A549 (cell line): ENCODE measurements at regions of chr5 and their contacts with region 1.

Region 1: DNA sequence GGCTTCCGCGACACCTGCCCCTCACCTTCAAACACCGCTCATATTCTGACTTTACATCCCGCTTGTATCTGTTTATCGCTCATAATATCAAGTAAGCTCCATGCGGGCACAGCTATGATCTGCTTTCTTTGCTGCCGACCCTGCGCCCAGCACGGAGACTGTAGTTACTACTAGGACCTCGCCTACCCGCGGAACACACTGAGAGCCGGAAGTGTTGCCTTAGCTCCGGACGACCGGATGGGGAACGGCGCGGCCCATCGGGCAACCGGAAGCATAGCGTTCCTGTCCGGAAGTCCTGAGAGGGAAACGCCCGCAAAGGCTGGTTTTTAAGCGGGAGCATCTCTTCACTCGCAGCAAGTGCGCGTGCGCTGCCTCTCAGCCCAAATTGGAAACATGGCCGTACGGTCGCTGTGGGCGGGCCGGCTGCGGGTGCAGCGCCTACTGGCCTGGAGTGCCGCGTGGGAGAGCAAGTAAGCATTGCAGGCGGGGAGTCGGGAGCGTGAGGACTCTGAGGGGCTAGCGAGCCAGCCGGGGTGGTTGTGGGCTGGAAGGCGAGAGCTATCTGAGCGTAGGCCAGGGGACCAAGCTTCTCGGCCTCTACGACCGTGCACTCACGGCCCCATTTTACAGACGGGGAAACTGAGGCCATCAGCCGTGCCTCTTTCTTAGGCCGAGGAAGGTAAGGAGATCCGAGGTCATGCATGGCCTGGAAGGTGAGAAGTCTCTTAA is at the start of gene GRPEL2:
- DNase-seq: peak; percentile 98 to 99
- ATAC-seq: peak; percentile 99 to 100
- H3K4me3 ChIP-seq: peak within 1 kb of the TSS; percentile 94
- H3K27ac ChIP-seq: peak within 1 kb of the TSS; percentile 89 to 93
- H3K4me1 ChIP-seq: peaks cover 23% of the 10 kb centered on the region
- CTCF ChIP-seq: peak; percentile 8; the same call in 1 of the 3 replicates
- EP300 ChIP-seq: no peak
- POLR2A ChIP-seq: peak; percentile 82
- RAD21 ChIP-seq: no peak
- polyA plus RNA-seq, gene GRPEL2: 17.0 and 26.4 TPM in 2 replicates

Region 2: GRCh38 chr5:149357370-149358293 is 12.3 kb after region 1 on chr5 and contains the start of gene PCYOX1L:
- CTCF ChIA-PET with region 1: interaction called, 12 read pairs
- POLR2A ChIA-PET with region 1: interaction called, 34 read pairs
- DNase-seq: peak; percentile 94 to 98
- ATAC-seq: peak; percentile 98 to 100
- H3K4me3 ChIP-seq: peak within 1 kb of the TSS; percentile 97
- H3K27ac ChIP-seq: peak within 1 kb of the TSS; percentile 83 to 90
- H3K4me1 ChIP-seq: peaks cover 10% of the 10 kb centered on the region; the same call in 2 of the 3 replicates
- CTCF ChIP-seq: no peak
- EP300 ChIP-seq: no peak
- POLR2A ChIP-seq: peak; percentile 78
- RAD21 ChIP-seq: no peak
- polyA plus RNA-seq, gene PCYOX1L: 6.7 and 7.0 TPM in 2 replicates

Region 3: DNA sequence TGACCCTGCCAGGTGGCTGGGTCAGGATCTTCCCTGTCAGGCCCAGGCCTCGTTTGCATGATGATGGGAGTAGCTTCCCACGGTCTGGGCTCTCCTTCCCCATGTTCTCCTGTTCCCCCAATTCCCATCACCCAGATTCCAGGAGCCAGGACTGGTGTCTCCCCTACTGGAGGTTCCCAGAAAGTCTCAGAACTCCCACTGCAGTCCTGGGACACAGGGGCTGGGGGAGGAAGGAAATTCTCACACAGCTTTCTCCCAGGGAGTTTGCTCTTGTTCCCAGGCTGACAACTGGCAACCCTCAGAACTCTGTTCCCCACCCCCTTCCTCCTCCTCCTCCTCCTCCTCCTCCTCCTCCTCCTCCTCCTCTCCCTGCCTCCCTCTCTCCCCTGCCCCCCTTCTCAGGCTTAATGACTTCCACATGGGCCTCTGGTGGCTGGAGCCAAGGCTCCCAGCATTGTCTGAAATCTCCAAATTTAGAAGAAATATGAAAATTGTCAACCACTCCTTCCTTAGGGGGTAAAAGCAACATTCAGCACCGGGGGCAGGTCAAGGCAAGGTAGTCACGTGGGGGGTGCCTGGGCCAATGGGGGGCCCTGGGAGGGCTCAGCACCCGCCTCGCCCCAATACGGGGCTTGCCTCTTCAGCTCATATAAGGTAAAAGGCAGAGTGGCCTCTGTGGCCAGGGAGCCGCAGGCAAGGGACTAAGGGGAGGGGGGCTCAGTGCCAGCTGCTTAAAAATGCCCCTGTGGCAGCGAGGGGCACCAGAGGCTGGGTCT is 61.1 kb after region 1 on chr5:
- CTCF ChIA-PET with region 1: no interaction called
- POLR2A ChIA-PET with region 1: no interaction called
- DNase-seq: no peak
- ATAC-seq: no peak
- H3K4me3 ChIP-seq: no peak overlapping the region
- H3K27ac ChIP-seq: peak overlapping the region; percentile 60 to 82; a peak in 4 of 6 replicates
- H3K4me1 ChIP-seq: peaks cover 39% of the 10 kb centered on the region
- CTCF ChIP-seq: no peak
- EP300 ChIP-seq: no peak
- POLR2A ChIP-seq: no peak
- RAD21 ChIP-seq: no peak